Activated CD4-positive, alpha-beta T cell treated with anti-CD3 and anti-CD28 coated beads for 36 hours (primary cell): ENCODE measurements at regions of chr6 and their contacts with region 1.

Region 1: DNA sequence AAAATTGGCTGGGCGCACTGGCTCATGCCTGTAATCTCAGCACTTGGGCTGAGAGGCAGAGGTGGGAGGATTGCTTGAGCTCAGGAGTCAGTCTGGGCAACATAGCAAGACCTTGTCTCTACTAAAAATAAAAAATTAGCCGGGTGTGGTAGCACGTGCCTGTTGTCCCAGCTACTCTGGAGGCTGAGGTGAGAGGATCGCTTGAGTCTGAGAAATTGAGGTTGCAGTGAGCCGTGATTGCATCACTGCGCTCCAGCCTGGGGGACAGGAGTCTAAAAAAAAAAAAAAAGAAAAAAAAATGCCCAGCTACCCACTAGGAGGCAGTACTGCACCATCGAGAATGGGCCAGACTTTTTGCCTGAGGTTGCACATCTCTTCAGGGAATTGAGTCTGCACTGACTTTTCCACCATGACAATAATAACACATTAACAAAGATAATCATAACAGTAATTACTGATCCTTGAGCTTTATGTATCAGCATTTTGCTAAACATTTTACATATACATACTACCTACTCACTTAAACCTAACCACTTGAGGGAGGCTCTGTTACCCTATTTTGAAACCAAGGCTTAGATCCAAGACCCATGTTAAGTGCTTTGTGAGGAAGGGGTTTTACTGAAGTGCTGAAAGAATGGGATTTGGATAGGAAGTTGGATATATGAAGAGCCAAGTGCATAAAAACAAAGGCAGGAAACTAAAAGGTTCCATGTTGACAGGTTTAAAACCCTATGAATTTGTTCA is 21.0 kb downstream of the SRSF3 start:
- DNase-seq: peak; percentile 71
- ATAC-seq: peak; percentile 67
- H3K4me3 Mint-ChIP-seq: no peak overlapping the region
- H3K27ac Mint-ChIP-seq: peak overlapping the region; percentile 24
- H3K4me1 Mint-ChIP-seq: peaks cover 13% of the 10 kb centered on the region
- H3K27me3 Mint-ChIP-seq: no peaks in the 10 kb centered on the region

Region 2: DNA sequence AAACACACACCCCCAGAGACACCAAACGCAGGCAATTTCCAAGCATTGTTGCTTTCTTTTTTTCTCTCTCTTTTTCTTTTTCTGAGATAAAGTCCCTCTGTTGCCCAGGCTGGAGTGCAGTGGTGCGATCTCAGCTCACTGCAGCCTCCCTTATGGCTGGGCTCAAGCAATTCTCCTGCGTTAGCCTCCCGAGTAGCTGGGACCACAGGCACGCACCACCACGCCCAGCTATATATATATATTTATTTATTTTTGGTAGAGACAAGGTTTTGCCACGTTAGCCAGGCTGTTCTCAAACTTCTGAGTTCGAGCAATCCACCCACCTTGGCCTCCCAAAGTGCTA is 35.0 kb before region 1 on chr6:
- CTCF ChIA-PET with region 1: no interaction called
- POLR2A ChIA-PET with region 1: no interaction called
- intact Hi-C with region 1: no loop called
- DNase-seq: no peak
- ATAC-seq: no peak
- H3K4me3 Mint-ChIP-seq: no peak overlapping the region
- H3K27ac Mint-ChIP-seq: no peak overlapping the region
- H3K4me1 Mint-ChIP-seq: peaks cover 6% of the 10 kb centered on the region
- H3K27me3 Mint-ChIP-seq: no peaks in the 10 kb centered on the region

Region 3: DNA sequence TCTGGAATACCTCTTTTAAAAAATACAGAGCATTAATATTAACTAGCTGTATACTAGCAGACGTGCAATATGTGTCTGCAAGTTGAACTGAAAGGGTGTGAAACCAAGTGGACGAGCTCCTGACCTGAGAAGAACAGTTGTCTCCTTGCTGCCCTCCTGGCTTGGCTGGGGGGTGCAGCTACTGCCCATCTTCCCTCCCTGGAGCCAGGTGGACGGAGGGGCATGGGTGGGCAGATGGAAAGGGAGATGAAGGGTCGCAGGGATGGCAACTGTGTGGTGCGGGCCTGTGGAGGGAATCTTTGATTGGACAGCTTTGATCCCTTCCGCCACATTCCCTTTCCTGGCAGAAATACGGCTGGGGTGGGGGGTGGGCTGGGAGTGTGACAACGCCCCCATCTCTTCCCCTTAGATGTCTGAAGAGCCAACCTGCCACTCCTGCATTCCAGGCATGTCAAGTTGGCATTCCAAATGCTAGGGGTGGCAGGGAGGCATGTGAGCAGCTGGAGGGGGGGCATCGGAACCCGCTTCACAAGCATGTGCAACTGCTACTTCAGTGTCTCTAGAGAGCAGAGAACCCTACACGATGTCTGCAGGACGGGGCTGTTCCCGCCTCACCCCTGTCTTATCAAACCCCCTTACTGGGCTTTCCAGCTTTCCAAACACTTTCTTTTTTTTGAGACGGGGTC is 16.3 kb after region 1 on chr6:
- CTCF ChIA-PET with region 1: interaction called, 12 read pairs
- POLR2A ChIA-PET with region 1: no interaction called
- intact Hi-C with region 1: no loop called
- DNase-seq: no peak
- ATAC-seq: no peak
- H3K4me3 Mint-ChIP-seq: no peak overlapping the region
- H3K27ac Mint-ChIP-seq: no peak overlapping the region
- H3K4me1 Mint-ChIP-seq: peaks cover 4% of the 10 kb centered on the region
- H3K27me3 Mint-ChIP-seq: no peaks in the 10 kb centered on the region

Region 4: GRCh38 chr6:36724514-36725390 is 109.6 kb after region 1 on chr6:
- CTCF ChIA-PET with region 1: interaction called, 10 read pairs
- POLR2A ChIA-PET with region 1: no interaction called
- intact Hi-C with region 1: loop called in 1 of 2 experiments (anchors 1 kb)
- DNase-seq: peak; percentile 82
- ATAC-seq: peak; percentile 45
- H3K4me3 Mint-ChIP-seq: no peak overlapping the region
- H3K27ac Mint-ChIP-seq: no peak overlapping the region
- H3K4me1 Mint-ChIP-seq: peaks cover 25% of the 10 kb centered on the region
- H3K27me3 Mint-ChIP-seq: no peaks in the 10 kb centered on the region

Region 5: DNA sequence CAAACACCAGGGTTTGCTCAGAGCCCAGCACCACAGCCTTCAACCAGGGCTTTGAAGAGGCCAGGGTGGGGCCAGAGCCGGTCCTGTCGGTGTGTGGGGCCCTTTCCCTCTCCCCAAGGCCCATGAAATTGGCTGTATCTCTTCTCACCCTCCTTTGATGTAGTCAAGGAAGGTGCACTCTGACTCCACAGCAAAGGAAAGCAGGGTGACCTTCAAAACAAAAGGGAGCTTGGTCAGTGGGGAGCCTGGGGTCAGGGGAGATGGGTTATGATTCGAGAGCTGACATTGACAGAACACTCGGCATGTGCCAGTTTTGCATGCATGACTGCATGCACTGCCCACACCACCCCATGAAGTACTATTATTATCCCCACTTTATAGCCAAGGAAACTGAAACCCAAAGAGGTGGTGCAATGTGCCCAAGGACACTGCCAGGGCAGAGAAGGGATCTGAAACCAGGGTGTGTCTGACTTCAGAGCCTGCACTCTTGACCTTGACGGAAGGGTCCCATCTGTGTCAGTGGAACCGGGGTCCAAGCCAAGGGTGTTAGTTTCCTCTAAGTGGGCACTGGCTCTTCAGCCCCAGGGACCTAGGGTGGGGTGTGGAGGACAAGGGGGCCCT is 137.8 kb after region 1 on chr6:
- CTCF ChIA-PET with region 1: interaction called, 15 read pairs
- POLR2A ChIA-PET with region 1: interaction called, 4 read pairs
- intact Hi-C with region 1: loop called in 1 of 2 experiments (anchors 2 kb)
- DNase-seq: peak; percentile 15
- ATAC-seq: peak; percentile 2
- H3K4me3 Mint-ChIP-seq: no peak overlapping the region
- H3K27ac Mint-ChIP-seq: peak overlapping the region; percentile 42
- H3K4me1 Mint-ChIP-seq: peaks cover 60% of the 10 kb centered on the region
- H3K27me3 Mint-ChIP-seq: no peaks in the 10 kb centered on the region

Region 6: GRCh38 chr6:36765594-36766398 is 150.6 kb after region 1 on chr6:
- CTCF ChIA-PET with region 1: interaction called, 60 read pairs
- POLR2A ChIA-PET with region 1: interaction called, 3 read pairs
- intact Hi-C with region 1: no loop called
- DNase-seq: peak; percentile 92
- ATAC-seq: peak; percentile 92
- H3K4me3 Mint-ChIP-seq: no peak overlapping the region
- H3K27ac Mint-ChIP-seq: no peak overlapping the region
- H3K4me1 Mint-ChIP-seq: peaks cover 26% of the 10 kb centered on the region
- H3K27me3 Mint-ChIP-seq: no peaks in the 10 kb centered on the region

Region 7: DNA sequence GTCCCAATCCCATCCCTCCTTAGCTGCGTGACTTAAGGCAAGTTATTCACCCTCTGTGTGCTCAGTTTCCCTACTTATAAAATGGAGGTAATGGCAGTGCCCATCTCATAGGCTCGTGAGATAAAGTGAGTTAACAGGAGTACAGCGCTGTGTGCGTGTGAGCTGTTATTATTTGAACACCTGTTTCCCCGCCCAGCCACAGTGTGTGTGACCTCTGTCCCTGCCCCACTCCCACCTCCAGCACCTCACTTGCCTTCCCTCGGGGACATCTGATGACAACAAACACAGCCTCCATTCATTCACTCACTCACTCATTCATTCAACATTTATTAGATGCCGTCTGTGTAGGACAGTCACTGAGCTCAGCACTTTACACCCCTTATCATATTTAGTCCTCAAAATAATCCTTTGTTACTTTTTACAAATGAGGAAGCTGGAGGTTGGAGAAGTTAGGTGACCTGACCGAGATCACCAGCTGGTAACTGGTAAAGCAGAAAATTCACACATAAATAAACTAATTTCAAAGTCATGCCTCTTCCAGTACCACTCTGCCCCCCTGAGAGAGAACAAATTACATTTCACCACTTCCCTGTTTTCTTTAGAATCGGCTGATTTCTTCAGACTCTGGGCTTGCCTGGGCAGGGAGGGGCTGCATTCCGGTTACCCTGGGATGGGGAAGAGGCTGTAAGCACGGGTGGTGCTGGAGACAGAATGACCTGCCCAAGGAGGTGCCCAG is 165.4 kb after region 1 on chr6:
- CTCF ChIA-PET with region 1: interaction called, 28 read pairs
- POLR2A ChIA-PET with region 1: no interaction called
- intact Hi-C with region 1: loop called in 1 of 2 experiments (anchors 2 kb)
- DNase-seq: no peak
- ATAC-seq: no peak
- H3K4me3 Mint-ChIP-seq: no peak overlapping the region
- H3K27ac Mint-ChIP-seq: no peak overlapping the region
- H3K4me1 Mint-ChIP-seq: no peaks in the 10 kb centered on the region
- H3K27me3 Mint-ChIP-seq: no peaks in the 10 kb centered on the region

Region 8: DNA sequence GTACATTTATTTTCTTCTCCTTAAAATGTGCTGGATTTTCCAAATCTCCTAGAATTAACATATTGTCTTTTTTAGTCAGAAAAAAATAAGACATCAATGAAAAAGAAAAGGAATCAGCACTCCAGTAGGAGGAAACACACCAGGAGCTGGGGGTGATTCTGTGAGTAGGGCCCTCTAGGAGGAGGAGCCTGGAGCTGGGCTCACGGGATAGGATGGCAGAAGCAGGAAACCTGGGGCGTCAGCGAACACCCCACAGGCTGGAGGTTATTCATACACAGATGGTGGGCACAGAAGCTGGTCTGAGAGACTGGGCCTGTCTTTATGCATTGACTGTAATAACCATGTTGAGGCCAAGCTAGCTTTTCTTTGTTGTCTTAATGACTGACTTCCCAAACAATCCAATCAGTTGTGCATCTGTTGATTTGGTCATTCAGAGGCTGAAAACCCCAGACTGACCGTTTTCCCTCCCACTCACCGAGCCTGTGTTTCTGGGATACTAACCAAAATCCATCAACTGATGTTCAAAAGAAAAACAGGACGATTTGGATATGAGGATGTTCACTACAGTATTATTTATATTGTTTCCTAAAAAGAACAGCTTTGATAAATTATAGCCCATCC is 171.0 kb after region 1 on chr6:
- CTCF ChIA-PET with region 1: interaction called, 28 read pairs
- POLR2A ChIA-PET with region 1: no interaction called
- intact Hi-C with region 1: loop called in 1 of 2 experiments (anchors 2 kb)
- DNase-seq: no peak
- ATAC-seq: no peak
- H3K4me3 Mint-ChIP-seq: no peak overlapping the region
- H3K27ac Mint-ChIP-seq: no peak overlapping the region
- H3K4me1 Mint-ChIP-seq: peaks cover 6% of the 10 kb centered on the region
- H3K27me3 Mint-ChIP-seq: peaks cover 2% of the 10 kb centered on the region